ENCODE measurements at regions of chr11 and their contacts with region 1.

Region 1: DNA sequence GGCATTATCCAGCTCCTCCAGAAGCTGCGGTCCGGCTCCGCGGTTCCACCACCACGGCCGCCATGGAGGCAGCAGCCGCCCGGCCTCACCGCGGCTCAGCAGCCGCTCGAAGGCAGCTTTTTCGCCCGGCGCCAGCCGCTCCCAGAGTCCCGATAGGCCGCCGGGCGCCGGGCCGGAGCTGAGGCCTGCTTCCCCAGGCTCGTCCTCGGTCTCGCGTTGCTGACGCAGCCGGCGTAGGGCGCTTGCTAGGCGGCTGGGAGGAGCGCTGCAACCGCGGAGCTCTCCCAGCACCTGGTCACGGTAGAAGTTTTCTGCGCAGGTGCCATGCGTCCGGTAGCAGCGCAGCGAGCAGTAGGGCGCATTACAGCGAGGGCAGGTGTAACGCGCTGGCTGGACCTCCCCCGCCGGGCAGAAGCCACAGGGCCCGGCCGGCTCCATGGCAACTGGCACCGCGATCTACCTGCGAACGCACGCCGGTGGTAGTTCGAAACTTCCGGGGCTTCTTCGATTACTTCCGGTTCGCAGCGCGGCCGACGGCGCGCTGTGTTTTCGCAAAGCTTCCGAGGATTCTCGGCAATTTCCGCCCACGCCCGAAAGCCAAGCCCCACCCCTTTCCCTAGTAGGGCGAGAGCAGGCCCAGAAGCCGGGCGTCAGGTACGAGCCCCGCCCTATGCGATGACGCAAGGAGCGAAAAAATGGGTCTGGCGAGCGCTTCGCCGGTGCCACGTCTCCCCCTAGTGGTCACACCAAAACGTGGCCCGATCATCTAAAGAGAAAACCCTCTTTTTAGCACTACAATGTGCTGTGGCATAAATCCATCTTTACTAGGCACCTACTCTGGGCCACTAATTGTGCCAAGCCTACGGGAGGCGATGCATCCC is at the start of gene ZNHIT2:
- DNase-seq: peak; percentile 98
- ATAC-seq: peak; percentile 70
- H3K4me3 Mint-ChIP-seq: peak within 1 kb of the TSS; percentile 87
- H3K27ac Mint-ChIP-seq: peak within 1 kb of the TSS; percentile 89
- H3K4me1 Mint-ChIP-seq: peaks cover 76% of the 10 kb centered on the region
- H3K27me3 Mint-ChIP-seq: no peaks in the 10 kb centered on the region
- CTCF ChIP-seq: peak; percentile 34
- total RNA-seq, gene ZNHIT2: 11.3 and 13.4 TPM in 2 replicates

Region 2: DNA sequence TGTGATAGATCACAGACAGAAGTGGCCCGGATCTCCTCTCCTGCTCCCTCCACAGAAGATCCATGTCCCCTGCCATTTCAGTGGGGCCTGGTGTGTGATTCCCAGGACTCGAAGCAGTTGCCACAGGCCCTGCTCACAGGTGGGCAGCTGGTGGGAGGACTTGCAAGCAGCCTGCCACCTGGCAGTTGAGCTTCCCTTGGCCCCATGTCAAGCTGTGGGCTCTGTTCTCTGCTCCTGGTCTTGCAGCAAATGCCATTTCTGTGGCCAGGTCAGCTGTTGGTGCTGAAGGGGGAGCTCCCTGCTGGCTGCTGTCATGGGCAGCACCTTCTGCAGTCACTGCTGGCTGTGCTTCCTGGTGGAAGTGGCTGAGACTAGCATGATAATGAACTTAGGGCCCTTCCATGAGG is 585.5 kb before region 1 on chr11:
- CTCF ChIA-PET with region 1: no interaction called
- POLR2A ChIA-PET with region 1: no interaction called
- intact Hi-C with region 1: no loop called
- DNase-seq: no peak
- ATAC-seq: no peak
- H3K4me3 Mint-ChIP-seq: no peak overlapping the region
- H3K27ac Mint-ChIP-seq: no peak overlapping the region
- H3K4me1 Mint-ChIP-seq: no peaks in the 10 kb centered on the region
- H3K27me3 Mint-ChIP-seq: peaks cover 57% of the 10 kb centered on the region
- CTCF ChIP-seq: no peak

Region 3: DNA sequence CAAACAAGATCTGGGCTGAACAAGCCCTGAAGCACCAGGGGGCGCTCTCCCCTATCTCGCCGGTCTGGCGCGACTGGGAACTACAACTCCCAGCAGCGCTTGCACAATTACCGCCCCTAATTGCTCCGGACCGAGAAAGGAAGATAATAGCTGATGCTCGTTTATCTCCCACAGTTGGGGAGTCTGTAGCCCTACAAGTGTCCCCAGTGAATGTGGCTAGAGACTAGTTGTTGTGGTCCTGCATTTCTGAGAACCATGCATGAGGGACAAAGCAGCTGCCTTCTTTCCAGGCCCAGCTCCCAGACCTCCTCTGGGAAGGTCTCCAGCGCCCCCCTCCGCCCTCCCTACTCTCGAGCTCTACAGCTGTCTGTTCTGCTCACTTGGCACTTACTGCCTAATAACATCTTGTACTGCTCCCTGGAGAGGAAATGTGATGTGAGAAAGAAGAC is 428.9 kb before region 1 on chr11:
- CTCF ChIA-PET with region 1: interaction called, 3 read pairs
- POLR2A ChIA-PET with region 1: interaction called, 7 read pairs
- intact Hi-C with region 1: loop called (anchors 1 kb)
- DNase-seq: peak; percentile 91
- ATAC-seq: peak; percentile 95
- H3K4me3 Mint-ChIP-seq: peak overlapping the region; percentile 82
- H3K27ac Mint-ChIP-seq: peak overlapping the region; percentile 82
- H3K4me1 Mint-ChIP-seq: peaks cover 21% of the 10 kb centered on the region
- H3K27me3 Mint-ChIP-seq: peaks cover 15% of the 10 kb centered on the region
- CTCF ChIP-seq: peak; percentile 85

Region 4: DNA sequence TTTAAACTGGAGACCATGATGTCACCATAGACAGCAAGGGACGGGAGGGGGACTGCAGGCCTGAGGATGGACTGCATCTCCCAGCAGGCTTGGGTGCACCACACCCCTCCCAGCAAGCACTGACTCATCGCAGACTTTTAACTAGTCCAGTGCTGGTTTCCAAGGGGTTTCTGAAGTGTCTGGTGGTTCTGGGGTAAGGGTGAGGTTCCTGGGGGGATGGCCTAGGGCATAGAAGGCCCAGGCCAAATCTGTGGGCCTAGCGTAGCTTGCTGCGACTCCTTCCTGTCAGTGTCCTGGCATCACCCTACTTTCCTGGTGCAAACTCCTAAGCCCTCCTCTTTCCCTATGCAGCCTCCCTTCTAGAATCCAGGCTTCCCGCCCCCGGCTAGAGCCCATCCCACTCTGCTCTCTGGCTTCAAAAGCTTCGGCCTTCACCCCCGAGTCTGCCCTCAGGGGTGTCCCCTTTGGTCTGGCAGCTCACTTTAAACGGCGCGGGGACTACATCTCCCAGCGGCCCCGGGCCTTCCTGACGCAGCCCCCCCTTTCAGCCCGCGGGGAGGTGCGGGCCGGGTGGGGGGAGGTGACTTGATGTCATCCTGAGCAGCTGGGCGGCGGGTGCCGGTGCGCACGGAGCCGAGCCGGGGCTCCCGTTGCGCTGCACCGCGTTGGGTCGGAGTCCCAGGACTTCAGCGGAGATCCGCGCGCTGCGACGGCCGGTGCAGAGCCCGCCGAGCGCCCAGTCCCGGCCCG is 193.2 kb before region 1 on chr11 and contains the start of gene PPP2R5B:
- CTCF ChIA-PET with region 1: no interaction called
- POLR2A ChIA-PET with region 1: no interaction called
- intact Hi-C with region 1: loop called (anchors 1 kb)
- DNase-seq: peak; percentile 83
- ATAC-seq: peak; percentile 95
- H3K4me3 Mint-ChIP-seq: peak within 1 kb of the TSS; percentile 93
- H3K27ac Mint-ChIP-seq: peak within 1 kb of the TSS; percentile 96
- H3K4me1 Mint-ChIP-seq: peaks cover 27% of the 10 kb centered on the region
- H3K27me3 Mint-ChIP-seq: no peaks in the 10 kb centered on the region
- CTCF ChIP-seq: no peak
- total RNA-seq, gene PPP2R5B: 12.0 and 12.6 TPM in 2 replicates

Region 5: DNA sequence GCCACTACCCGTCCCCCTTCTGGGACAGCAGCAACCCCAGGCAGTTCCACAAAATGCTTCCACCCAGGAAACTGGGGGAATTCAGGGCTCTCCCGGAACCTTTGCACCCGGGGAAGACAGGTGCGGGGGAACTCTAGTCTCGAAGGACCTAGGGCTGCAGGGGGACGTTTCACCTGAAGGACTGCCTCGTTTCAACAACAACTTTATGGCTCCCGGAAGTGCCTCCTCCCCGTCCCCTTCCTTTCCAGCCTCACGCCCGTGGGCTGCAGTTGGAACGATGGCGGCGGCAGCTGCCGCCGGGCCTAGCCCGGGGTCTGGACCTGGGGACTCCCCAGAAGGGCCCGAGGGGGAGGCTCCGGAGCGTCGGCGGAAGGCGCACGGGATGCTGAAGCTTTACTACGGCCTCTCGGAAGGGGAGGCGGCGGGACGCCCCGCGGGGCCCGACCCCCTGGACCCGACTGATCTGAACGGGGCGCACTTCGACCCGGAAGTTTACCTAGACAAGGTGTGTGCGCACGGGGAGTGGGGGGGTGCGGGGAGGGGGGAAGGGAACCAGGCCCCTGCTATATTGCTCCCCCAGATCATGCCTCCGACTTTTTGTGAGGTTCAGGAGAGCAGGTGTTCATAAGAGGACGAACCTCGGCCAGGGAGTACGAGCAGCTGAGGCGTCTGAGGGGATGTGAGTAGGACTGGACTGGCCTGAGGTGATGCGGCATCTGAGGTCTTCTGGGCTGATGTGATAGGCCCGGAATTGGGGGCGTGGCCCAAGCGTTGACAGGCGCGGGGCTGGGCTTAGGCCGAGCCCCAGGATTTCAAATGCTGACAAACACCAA is 21.3 kb before region 1 on chr11 and contains the start of gene VPS51:
- CTCF ChIA-PET with region 1: interaction called, 4 read pairs
- POLR2A ChIA-PET with region 1: interaction called, 20 read pairs
- intact Hi-C with region 1: loop called (anchors 1 kb)
- DNase-seq: peak; percentile 74
- ATAC-seq: peak; percentile 92
- H3K4me3 Mint-ChIP-seq: peak within 1 kb of the TSS; percentile 91
- H3K27ac Mint-ChIP-seq: peak within 1 kb of the TSS; percentile 88
- H3K4me1 Mint-ChIP-seq: peaks cover 18% of the 10 kb centered on the region
- H3K27me3 Mint-ChIP-seq: no peaks in the 10 kb centered on the region
- CTCF ChIP-seq: no peak
- total RNA-seq, gene VPS51: 224 and 243 TPM in 2 replicates

Region 6: GRCh38 chr11:65169164-65169641 is 51.7 kb after region 1 on chr11:
- CTCF ChIA-PET with region 1: interaction called, 5 read pairs
- POLR2A ChIA-PET with region 1: interaction called, 10 read pairs
- intact Hi-C with region 1: no loop called
- DNase-seq: no peak
- ATAC-seq: peak; percentile 62
- H3K4me3 Mint-ChIP-seq: no peak overlapping the region
- H3K27ac Mint-ChIP-seq: peak overlapping the region; percentile 87
- H3K4me1 Mint-ChIP-seq: peaks cover 12% of the 10 kb centered on the region
- H3K27me3 Mint-ChIP-seq: no peaks in the 10 kb centered on the region
- CTCF ChIP-seq: no peak

Region 7: GRCh38 chr11:65382033-65382807 is 264.8 kb after region 1 on chr11 and contains the start of gene SLC25A45:
- CTCF ChIA-PET with region 1: no interaction called
- POLR2A ChIA-PET with region 1: no interaction called
- intact Hi-C with region 1: no loop called
- DNase-seq: peak; percentile 84
- ATAC-seq: peak; percentile 84
- H3K4me3 Mint-ChIP-seq: peak within 1 kb of the TSS; percentile 82
- H3K27ac Mint-ChIP-seq: peak within 1 kb of the TSS; percentile 94
- H3K4me1 Mint-ChIP-seq: peaks cover 67% of the 10 kb centered on the region
- H3K27me3 Mint-ChIP-seq: no peaks in the 10 kb centered on the region
- CTCF ChIP-seq: no peak
- total RNA-seq, gene SLC25A45: 11.4 and 12.3 TPM in 2 replicates

Measured in activated B cell treated with CpG ODN at 0.5 μM for 24 hours (primary cell).